Dorsolateral prefrontal cortex (tissue), 120 donors: ENCODE measurements at regions of chrX and their contacts with region 1.

Region 1: DNA sequence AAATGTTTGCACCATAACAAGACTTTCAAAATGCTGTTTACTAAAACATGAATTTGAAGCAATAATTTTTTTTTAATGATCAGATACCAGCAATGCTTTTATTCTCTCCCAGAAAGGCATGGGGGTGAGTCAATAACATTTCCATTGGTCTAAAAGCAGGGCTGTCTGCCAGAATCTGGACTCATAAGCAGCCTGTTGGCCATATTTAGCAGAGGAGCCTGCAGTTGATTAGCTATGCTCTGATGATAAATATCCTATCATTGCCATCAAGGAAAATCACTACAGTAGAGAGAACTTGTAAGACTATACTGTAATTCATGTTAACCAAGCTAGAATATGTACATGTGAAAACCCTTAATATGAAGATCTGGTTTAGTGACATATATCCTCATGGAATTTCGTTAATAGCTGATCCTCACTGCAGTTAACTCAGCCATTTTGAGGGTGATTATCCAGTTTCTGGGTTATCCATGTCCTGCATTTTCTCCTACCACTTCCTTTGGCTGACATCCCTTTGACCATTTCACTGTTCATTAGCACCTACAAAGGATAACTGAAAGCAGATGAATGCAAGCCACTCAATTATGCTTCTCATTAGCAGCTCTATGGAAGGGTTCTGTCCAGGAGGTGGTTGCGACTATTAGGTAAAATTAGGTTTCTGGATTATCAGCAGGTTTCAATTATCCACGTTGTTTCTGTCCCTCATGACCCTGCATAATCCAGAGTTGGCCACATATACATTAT is 72.9 kb upstream of the DIAPH2 start:
- DNase-seq: no peak
- H3K4me3 ChIP-seq: no peak overlapping the region
- H3K27ac ChIP-seq: no peak overlapping the region
- H3K27me3 ChIP-seq: peaks cover 0 to 73% (median 12%) of the 10 kb centered on the region in 45 donors
- CTCF ChIP-seq: no peak

Region 2: DNA sequence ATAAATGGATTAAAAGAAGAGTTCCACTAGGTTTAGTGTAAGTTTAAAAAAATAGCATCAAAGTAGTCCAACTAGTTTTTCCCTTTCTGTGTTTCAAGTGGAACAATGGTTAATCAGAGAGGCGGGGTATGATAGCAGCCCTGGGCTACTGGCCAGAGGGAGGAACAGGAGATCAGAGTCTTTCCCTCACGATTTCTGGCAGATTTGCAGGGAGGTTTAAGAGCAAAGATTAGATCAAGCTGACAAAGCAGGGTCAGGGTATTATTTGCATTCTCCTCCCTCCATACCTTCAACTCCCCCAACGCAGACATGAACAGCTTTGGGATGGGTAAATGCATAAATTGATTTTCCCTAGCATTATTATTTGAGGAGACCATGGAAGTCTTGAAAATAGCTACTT is 204.7 kb before region 1 on chrX:
- intact Hi-C with region 1: no loop called
- DNase-seq: no peak
- H3K4me3 ChIP-seq: no peak overlapping the region
- H3K27ac ChIP-seq: no peak overlapping the region
- H3K27me3 ChIP-seq: peaks cover 0 to 75% (median 20%) of the 10 kb centered on the region in 45 donors
- CTCF ChIP-seq: no peak

Region 3: GRCh38 chrX:96540111-96540631 is 71.6 kb before region 1 on chrX:
- intact Hi-C with region 1: loop called in 1 of 2 experiments (anchors 10 kb)
- DNase-seq: no peak
- H3K4me3 ChIP-seq: no peak overlapping the region
- H3K27ac ChIP-seq: no peak overlapping the region
- H3K27me3 ChIP-seq: peaks cover 0 to 66% (median 14%) of the 10 kb centered on the region in 45 donors
- CTCF ChIP-seq: no peak